ENCODE measurements at regions of chr7 and their contacts with region 1.

Region 1: GRCh38 chr7:7542251-7542835 is 6.7 kb upstream of the COL28A1 start:
- DNase-seq: no peak
- H3K4me3 ChIP-seq: no peak overlapping the region
- H3K4me3 Mint-ChIP-seq: no peak overlapping the region
- H3K27ac ChIP-seq: no peak overlapping the region
- H3K27ac Mint-ChIP-seq: no peak overlapping the region
- H3K4me1 ChIP-seq: no peaks in the 10 kb centered on the region
- H3K4me1 Mint-ChIP-seq: peaks cover 0 to 3% (median under 1%) of the 10 kb centered on the region in 4 donors
- H3K27me3 ChIP-seq: no peaks in the 10 kb centered on the region
- H3K27me3 Mint-ChIP-seq: peaks cover 0 to 1% of the 10 kb centered on the region in 2 donors

Region 2: GRCh38 chr7:7257899-7258692 is 284.2 kb before region 1 on chr7:
- CTCF ChIA-PET with region 1: no interaction called
- POLR2A ChIA-PET with region 1: no interaction called
- intact Hi-C with region 1: loop called (anchors 5 kb)
- DNase-seq: no peak
- H3K4me3 ChIP-seq: no peak overlapping the region
- H3K4me3 Mint-ChIP-seq: peak overlapping the region; percentile 49 to 86 (median 82)
- H3K27ac ChIP-seq: peak overlapping the region; percentile 69
- H3K27ac Mint-ChIP-seq: peak overlapping the region; percentile 76 to 95 (median 91)
- H3K4me1 ChIP-seq: peaks cover 22% of the 10 kb centered on the region
- H3K4me1 Mint-ChIP-seq: peaks cover 24 to 44% (median 31%) of the 10 kb centered on the region in 4 donors
- H3K27me3 ChIP-seq: no peaks in the 10 kb centered on the region
- H3K27me3 Mint-ChIP-seq: no peaks in the 10 kb centered on the region

Region 3: GRCh38 chr7:7424151-7424873 is 118.0 kb before region 1 on chr7:
- CTCF ChIA-PET with region 1: interaction called, 4 read pairs
- POLR2A ChIA-PET with region 1: no interaction called
- intact Hi-C with region 1: loop called (anchors 2 kb)
- DNase-seq: peak in 4 of 5 donors; percentile 6 to 32 (median 29)
- H3K4me3 ChIP-seq: peak overlapping the region; percentile 33 to 41
- H3K4me3 Mint-ChIP-seq: peak overlapping the region in 7 of 8 donors; percentile 81 to 89 (median 85)
- H3K27ac ChIP-seq: no peak overlapping the region
- H3K27ac Mint-ChIP-seq: peak overlapping the region in 4 of 7 donors; percentile 17 to 71 (median 53)
- H3K4me1 ChIP-seq: no peaks in the 10 kb centered on the region
- H3K4me1 Mint-ChIP-seq: peaks cover 0 to 10% (median 6%) of the 10 kb centered on the region in 4 donors
- H3K27me3 ChIP-seq: no peaks in the 10 kb centered on the region
- H3K27me3 Mint-ChIP-seq: peaks cover 0 to 1% of the 10 kb centered on the region in 2 donors

Region 4: GRCh38 chr7:7489546-7489945 is 52.8 kb before region 1 on chr7:
- CTCF ChIA-PET with region 1: no interaction called
- POLR2A ChIA-PET with region 1: no interaction called
- intact Hi-C with region 1: no loop called
- DNase-seq: no peak
- H3K4me3 ChIP-seq: no peak overlapping the region
- H3K4me3 Mint-ChIP-seq: no peak overlapping the region
- H3K27ac ChIP-seq: no peak overlapping the region
- H3K27ac Mint-ChIP-seq: no peak overlapping the region
- H3K4me1 ChIP-seq: no peaks in the 10 kb centered on the region
- H3K4me1 Mint-ChIP-seq: no peaks in the 10 kb centered on the region
- H3K27me3 ChIP-seq: no peaks in the 10 kb centered on the region
- H3K27me3 Mint-ChIP-seq: peaks cover 3 to 7% of the 10 kb centered on the region in 2 donors